Activated T-helper 2 cell treated with anti-CD3 and anti-CD28 coated beads, Interferon-gamma antibody, Interleukin-2, Interleukin-4, amounts not matched to agents 10 μg/mL and 5 μg/mL and 100 μg/mL, durations not matched to agents 14 hours and 24 hours and 36 hours (primary cell): ENCODE measurements at regions of chr11 and their contacts with region 1.

Region 1: DNA sequence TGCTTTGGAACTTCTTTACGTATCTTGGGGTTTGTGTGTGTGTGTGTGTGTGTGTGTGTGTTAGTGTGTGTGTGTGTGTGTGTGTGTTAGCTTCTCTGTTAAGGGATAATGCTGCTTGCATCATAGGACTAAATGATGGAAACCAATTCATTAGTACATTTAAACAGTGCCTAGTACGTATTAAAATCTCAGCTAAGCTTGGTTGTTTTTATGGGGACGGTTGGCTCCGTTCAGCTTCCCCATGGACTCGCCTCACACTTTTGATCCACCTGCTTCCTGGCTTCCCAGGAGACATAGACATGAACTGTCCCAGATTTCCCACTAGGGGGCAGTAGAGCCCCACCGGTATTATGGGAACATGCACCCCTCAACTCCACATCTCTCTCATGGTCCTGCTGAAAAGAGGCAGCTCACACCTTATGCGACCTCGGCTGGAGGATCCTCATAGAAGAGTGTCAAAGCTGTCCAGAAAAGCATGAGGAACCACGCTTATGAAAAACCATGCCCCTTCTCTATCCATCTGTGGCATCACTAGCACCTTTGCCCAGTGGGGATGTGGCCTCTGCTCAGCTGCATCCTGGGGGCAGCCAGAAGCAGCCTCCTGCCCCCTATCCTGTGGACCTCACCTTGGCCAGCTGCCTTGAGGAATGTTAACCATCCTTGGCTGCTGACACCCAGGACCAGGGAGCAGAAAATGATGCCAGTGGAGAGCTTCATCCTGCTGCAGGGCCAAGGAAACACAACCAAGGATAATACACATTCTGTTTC is 9.7 kb upstream of the SAAL1 start:
- DNase-seq: peak; percentile 46
- H3K4me3 Mint-ChIP-seq: no peak overlapping the region
- H3K27ac Mint-ChIP-seq: no peak overlapping the region
- H3K4me1 Mint-ChIP-seq: peaks cover 2% of the 10 kb centered on the region
- H3K27me3 Mint-ChIP-seq: peaks cover 24% of the 10 kb centered on the region

Region 2: GRCh38 chr11:17683378-17684161 is 432.0 kb before region 1 on chr11:
- intact Hi-C with region 1: no loop called
- DNase-seq: no peak
- H3K4me3 Mint-ChIP-seq: no peak overlapping the region
- H3K27ac Mint-ChIP-seq: no peak overlapping the region
- H3K4me1 Mint-ChIP-seq: no peaks in the 10 kb centered on the region
- H3K27me3 Mint-ChIP-seq: peaks cover 7% of the 10 kb centered on the region

Region 3: GRCh38 chr11:18063084-18063483 is 52.5 kb before region 1 on chr11:
- intact Hi-C with region 1: no loop called
- DNase-seq: no peak
- H3K4me3 Mint-ChIP-seq: no peak overlapping the region
- H3K27ac Mint-ChIP-seq: no peak overlapping the region
- H3K4me1 Mint-ChIP-seq: no peaks in the 10 kb centered on the region
- H3K27me3 Mint-ChIP-seq: peaks cover 7% of the 10 kb centered on the region

Region 4: DNA sequence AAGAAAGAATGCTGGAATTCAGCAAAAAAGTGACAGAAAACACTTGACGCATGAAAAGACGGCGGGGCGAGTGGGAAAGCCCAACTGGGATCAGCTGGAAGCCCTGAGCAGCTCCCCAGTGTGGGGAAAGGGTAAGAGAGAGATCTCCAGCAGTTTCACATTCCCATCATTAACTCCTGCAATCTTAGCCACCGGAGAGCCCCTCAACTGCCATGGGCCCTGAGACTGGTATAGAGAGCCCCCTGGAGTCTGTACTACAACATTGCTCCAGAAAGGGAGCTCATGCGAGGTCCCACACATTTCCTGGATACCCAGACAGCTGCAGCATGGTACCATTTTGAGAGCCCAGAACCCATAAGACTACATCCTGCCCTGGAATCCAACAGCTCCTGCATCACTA is 88.2 kb after region 1 on chr11:
- intact Hi-C with region 1: loop called (anchors 10 kb)
- DNase-seq: no peak
- H3K4me3 Mint-ChIP-seq: no peak overlapping the region
- H3K27ac Mint-ChIP-seq: no peak overlapping the region
- H3K4me1 Mint-ChIP-seq: peaks cover 16% of the 10 kb centered on the region
- H3K27me3 Mint-ChIP-seq: peaks cover 57% of the 10 kb centered on the region

Region 5: GRCh38 chr11:18479063-18479462 is 363.5 kb after region 1 on chr11:
- intact Hi-C with region 1: no loop called
- DNase-seq: no peak
- H3K4me3 Mint-ChIP-seq: no peak overlapping the region
- H3K27ac Mint-ChIP-seq: no peak overlapping the region
- H3K4me1 Mint-ChIP-seq: no peaks in the 10 kb centered on the region
- H3K27me3 Mint-ChIP-seq: no peaks in the 10 kb centered on the region

Region 6: GRCh38 chr11:18768472-18768901 is 652.9 kb after region 1 on chr11:
- intact Hi-C with region 1: loop called (anchors 2 kb)
- DNase-seq: no peak
- H3K4me3 Mint-ChIP-seq: no peak overlapping the region
- H3K27ac Mint-ChIP-seq: no peak overlapping the region
- H3K4me1 Mint-ChIP-seq: peaks cover 24% of the 10 kb centered on the region
- H3K27me3 Mint-ChIP-seq: no peaks in the 10 kb centered on the region